PC-9 (cell line): ENCODE measurements at regions of chr11 and their contacts with region 1.

Region 1: DNA sequence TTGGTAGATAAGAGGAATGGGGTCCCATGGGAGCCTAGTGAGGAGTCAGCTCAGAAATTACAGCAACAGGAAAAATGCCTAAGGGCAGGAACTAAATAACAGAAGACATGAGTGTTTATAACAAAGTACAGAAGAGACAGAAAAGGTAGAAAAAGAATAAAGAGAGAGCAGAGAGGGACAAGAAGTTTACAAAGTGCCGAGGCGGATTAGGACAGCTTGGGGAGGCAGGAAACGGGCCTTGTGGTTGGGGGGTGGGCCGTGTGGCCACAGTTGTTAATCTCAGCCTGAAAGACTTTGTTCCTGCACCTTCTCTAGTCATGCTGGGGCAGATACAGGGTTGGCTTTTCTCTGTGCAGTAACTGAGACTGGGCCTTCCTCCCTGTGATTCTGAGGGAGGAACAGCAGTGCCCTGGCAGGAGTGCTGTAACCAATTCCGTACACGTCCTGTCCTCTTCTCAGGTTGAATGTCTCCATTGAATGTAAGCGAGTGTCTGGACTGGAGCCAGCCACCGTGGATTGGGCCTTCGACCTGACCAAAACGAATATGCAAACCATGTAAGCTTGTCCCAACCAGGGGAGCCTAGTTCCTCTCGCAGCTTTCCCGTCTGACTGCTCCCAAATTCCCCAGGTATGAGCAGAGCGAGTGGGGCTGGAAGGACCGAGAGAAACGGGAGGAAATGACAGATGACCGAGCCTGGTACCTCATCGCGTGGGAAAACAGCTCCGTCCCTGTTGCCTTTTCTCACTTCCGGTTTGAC is 13.2 kb downstream of the NAA40 start:
- DNase-seq: no peak
- H3K4me3 ChIP-seq: no peak overlapping the region
- H3K27ac ChIP-seq: no peak overlapping the region
- H3K4me1 ChIP-seq: no peaks in the 10 kb centered on the region
- H3K27me3 ChIP-seq: no peaks in the 10 kb centered on the region
- CTCF ChIP-seq: no peak

Region 2: GRCh38 chr11:62889484-62890437 is 1062.2 kb before region 1 on chr11:
- CTCF ChIA-PET with region 1: interaction called, 13 read pairs
- POLR2A ChIA-PET with region 1: no interaction called
- intact Hi-C with region 1: no loop called
- DNase-seq: peak in 1 of 2 experiments; percentile 61
- H3K4me3 ChIP-seq: no peak overlapping the region
- H3K27ac ChIP-seq: peak overlapping the region; percentile 27
- H3K4me1 ChIP-seq: peaks cover 15% of the 10 kb centered on the region; the same call in 1 of the 2 replicates
- H3K27me3 ChIP-seq: no peaks in the 10 kb centered on the region
- CTCF ChIP-seq: no peak

Region 3: GRCh38 chr11:63813035-63813562 is 138.9 kb before region 1 on chr11 and contains the start of gene SPINDOC:
- CTCF ChIA-PET with region 1: interaction called, 14 read pairs
- POLR2A ChIA-PET with region 1: no interaction called
- intact Hi-C with region 1: no loop called
- DNase-seq: peak in 1 of 2 experiments; percentile 84
- H3K4me3 ChIP-seq: peak within 1 kb of the TSS; percentile 99
- H3K27ac ChIP-seq: no peak within 1 kb of the TSS
- H3K4me1 ChIP-seq: peaks cover 17% of the 10 kb centered on the region
- H3K27me3 ChIP-seq: no peaks in the 10 kb centered on the region
- CTCF ChIP-seq: no peak
- total RNA-seq, gene SPINDOC: 46.8 and 49.7 TPM in 2 replicates

Region 4: GRCh38 chr11:64040684-64041322 is 88.8 kb after region 1 on chr11:
- CTCF ChIA-PET with region 1: interaction called, 11 read pairs
- POLR2A ChIA-PET with region 1: no interaction called
- intact Hi-C with region 1: no loop called
- DNase-seq: no peak
- H3K4me3 ChIP-seq: no peak overlapping the region
- H3K27ac ChIP-seq: no peak overlapping the region
- H3K4me1 ChIP-seq: no peaks in the 10 kb centered on the region
- H3K27me3 ChIP-seq: no peaks in the 10 kb centered on the region
- CTCF ChIP-seq: peak; percentile 60